ENCODE measurements at regions of chr12 and their contacts with region 1.

Region 1: GRCh38 chr12:21486000-21486399 is 15.4 kb downstream of the RECQL start:
- DNase-seq: no peak
- ATAC-seq: no peak
- H3K4me3 ChIP-seq: no peak overlapping the region
- H3K27ac ChIP-seq: no peak overlapping the region
- H3K4me1 ChIP-seq: no peaks in the 10 kb centered on the region
- H3K27me3 ChIP-seq: no peaks in the 10 kb centered on the region
- CTCF ChIP-seq: no peak

Region 2: DNA sequence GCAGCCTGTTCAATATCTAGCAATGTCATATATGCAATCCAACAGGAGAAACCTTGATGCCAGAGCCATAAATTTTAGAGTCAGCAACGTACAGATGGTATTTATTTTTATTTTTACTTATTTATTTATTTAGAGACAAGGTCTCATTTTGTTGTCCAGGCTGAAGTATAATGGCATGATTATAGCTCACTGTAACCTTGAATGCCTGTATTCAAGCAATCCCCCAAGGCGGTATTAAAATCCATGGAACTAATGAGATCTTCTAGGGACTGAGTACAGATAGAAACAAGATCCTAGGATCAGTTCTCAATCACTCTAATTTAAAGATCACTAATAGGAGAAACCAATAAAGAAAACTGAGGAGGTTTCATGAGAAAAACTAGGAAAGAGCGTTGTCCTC is 265.7 kb before region 1 on chr12:
- intact Hi-C with region 1: no loop called
- DNase-seq: no peak
- ATAC-seq: no peak
- H3K4me3 ChIP-seq: no peak overlapping the region
- H3K27ac ChIP-seq: no peak overlapping the region
- H3K4me1 ChIP-seq: no peaks in the 10 kb centered on the region
- H3K27me3 ChIP-seq: no peaks in the 10 kb centered on the region
- CTCF ChIP-seq: no peak

Region 3: DNA sequence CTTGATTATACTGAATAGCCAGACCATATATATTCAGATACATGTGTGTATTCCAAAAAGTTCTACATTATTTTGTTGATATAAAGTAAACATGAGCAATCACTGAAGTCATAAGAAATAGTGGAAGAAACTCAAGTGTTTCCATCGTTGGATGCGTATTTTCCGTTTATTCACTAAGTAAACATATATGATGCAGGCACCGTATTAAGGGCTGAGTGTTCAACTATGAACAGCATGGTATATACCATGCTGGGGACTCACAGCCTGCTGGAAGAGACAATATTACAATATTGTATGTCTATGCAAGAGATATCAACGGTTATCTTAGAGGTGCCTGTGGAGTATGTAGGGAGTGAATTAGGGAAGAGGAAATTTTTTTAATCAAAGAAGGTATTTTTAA is 47.4 kb before region 1 on chr12:
- intact Hi-C with region 1: no loop called
- DNase-seq: no peak
- ATAC-seq: no peak
- H3K4me3 ChIP-seq: peak overlapping the region in 9 of 10 donors; percentile 58 to 92 (median 73)
- H3K27ac ChIP-seq: peak overlapping the region in 3 of 10 donors; percentile 84 to 94 (median 93)
- H3K4me1 ChIP-seq: peaks cover 0 to 23% (median 11%) of the 10 kb centered on the region in 9 donors
- H3K27me3 ChIP-seq: peaks cover 0 to 3% (median 0%) of the 10 kb centered on the region in 7 donors
- CTCF ChIP-seq: no peak

Region 4: DNA sequence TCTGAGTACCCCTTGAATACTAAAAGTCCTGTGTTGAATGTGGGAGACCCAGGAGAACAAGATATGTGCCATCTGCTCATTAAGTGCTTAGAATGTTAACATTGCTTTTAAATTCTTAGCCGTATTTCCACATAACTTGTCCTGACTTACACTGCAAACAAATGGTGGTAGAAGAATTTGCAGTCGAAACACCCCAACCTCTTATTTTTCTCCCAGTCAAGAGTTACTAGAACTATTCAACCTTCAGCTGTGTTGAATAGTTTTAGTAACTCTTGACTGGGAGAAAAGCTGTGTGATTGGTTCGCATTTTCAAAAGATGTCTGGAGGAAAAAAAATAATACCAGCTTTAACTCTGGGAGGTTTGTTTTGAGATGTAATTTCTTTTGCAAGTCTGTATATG is 32.5 kb after region 1 on chr12:
- intact Hi-C with region 1: loop called in 1 of 10 experiments (anchors 2 kb)
- DNase-seq: no peak
- ATAC-seq: no peak
- H3K4me3 ChIP-seq: no peak overlapping the region
- H3K27ac ChIP-seq: no peak overlapping the region
- H3K4me1 ChIP-seq: peaks cover 0 to 6% (median 0%) of the 10 kb centered on the region in 9 donors
- H3K27me3 ChIP-seq: no peaks in the 10 kb centered on the region
- CTCF ChIP-seq: no peak